Activated T-helper 2 cell treated with anti-CD3 and anti-CD28 coated beads, Interferon-gamma antibody, Interleukin-2, Interleukin-4, amounts not matched to agents 10 μg/mL and 5 μg/mL and 100 μg/mL, durations not matched to agents 14 hours and 24 hours and 36 hours (primary cell): ENCODE measurements at regions of chrX and their contacts with region 1.

Region 1: GRCh38 chrX:51802917-51803688 is 59.9 kb downstream of the GSPT2 start:
- DNase-seq: peak; percentile 31
- H3K4me3 Mint-ChIP-seq: peak overlapping the region; percentile 92
- H3K27ac Mint-ChIP-seq: peak overlapping the region; percentile 92
- H3K4me1 Mint-ChIP-seq: peaks cover 18% of the 10 kb centered on the region
- H3K27me3 Mint-ChIP-seq: peaks cover 5% of the 10 kb centered on the region

Region 2: DNA sequence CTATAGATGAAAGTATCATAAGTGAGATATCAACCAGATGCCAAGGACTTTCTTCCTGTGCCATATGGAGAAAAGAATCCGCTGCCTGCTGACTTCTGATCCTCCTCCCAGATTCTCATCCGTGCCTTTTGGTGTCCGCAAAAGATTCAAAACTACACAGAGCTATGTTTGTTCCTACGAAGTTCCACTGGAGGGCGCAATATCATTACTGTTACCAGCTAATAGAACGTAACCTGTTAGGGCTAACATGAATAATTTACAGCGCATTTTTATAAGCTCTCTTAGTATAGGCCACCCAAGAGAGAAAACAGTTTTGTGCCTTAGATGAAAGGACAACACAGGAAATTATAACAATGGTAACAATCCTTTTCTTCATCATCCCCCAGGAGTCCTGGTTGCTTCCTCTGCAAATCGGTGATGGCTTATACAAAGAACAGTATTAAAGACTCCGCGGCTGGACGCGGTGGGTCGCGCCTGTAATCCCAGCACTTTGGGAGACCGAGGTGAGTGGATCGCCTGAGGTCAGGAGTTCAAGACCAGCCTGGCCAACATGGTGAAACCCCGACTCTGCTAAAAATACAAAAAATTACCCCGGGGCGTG is 161.6 kb before region 1 on chrX:
- intact Hi-C with region 1: loop called (anchors 1 kb)
- DNase-seq: no peak
- H3K4me3 Mint-ChIP-seq: no peak overlapping the region
- H3K27ac Mint-ChIP-seq: no peak overlapping the region
- H3K4me1 Mint-ChIP-seq: no peaks in the 10 kb centered on the region
- H3K27me3 Mint-ChIP-seq: peaks cover 5% of the 10 kb centered on the region

Region 3: GRCh38 chrX:51743179-51743957 is 59.7 kb before region 1 on chrX and contains the start of gene GSPT2:
- intact Hi-C with region 1: loop called (anchors 1 kb)
- DNase-seq: peak; percentile 64
- H3K4me3 Mint-ChIP-seq: peak within 1 kb of the TSS; percentile 91
- H3K27ac Mint-ChIP-seq: peak within 1 kb of the TSS; percentile 74
- H3K4me1 Mint-ChIP-seq: peaks cover 9% of the 10 kb centered on the region
- H3K27me3 Mint-ChIP-seq: peaks cover 7% of the 10 kb centered on the region
- total RNA-seq, gene GSPT2: 11.4 and 12.1 TPM in 2 replicates

Region 4: DNA sequence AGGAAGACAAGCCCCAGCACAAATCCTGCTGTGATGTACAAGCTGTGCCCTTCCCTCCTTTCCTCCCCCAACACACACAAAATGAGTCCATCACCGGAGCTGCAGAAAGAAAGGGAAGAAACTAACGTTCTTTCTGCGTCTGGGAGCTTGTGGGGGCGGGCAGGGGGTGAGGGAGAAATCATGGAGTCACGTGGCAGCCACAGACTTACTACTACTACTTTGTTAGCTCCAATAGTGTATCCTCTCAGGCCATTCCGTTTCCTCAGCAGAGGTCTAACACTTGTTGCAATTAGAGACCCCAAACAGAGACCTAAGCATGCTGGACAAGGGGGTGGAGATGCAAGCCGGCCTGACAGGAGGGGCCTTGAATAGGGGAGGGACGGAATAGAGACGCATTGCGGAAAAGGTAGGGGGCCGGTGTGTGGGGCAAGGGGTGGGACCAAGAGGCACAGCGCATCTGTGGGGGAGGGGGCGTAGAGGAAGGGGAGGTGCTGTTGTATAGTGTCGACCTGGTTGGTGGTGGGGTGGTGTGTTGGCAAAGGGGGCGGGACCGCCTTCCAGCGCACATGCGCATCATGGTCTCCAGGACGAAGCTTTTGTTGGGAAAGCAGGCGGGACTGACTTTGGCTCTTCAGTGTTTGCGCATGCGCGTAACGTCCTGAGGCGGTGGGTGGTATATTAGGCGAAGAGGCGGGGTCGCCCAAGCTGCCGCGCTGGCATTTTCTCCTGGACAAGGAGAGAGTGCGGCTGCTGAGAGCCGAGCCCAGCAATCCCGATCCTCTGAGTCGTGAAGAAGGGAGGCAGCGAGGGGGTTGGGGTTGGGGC is 90.0 kb after region 1 on chrX and contains the start of gene MAGED1:
- intact Hi-C with region 1: loop called (anchors 10 kb)
- DNase-seq: peak; percentile 75
- H3K4me3 Mint-ChIP-seq: peak within 1 kb of the TSS; percentile 96
- H3K27ac Mint-ChIP-seq: peak within 1 kb of the TSS; percentile 91
- H3K4me1 Mint-ChIP-seq: peaks cover 25% of the 10 kb centered on the region
- H3K27me3 Mint-ChIP-seq: no peaks in the 10 kb centered on the region
- total RNA-seq, gene MAGED1: 45.5 and 46.5 TPM in 2 replicates

Region 5: GRCh38 chrX:51922561-51922960 is 119.5 kb after region 1 on chrX:
- intact Hi-C with region 1: no loop called
- DNase-seq: no peak
- H3K4me3 Mint-ChIP-seq: no peak overlapping the region
- H3K27ac Mint-ChIP-seq: no peak overlapping the region
- H3K4me1 Mint-ChIP-seq: no peaks in the 10 kb centered on the region
- H3K27me3 Mint-ChIP-seq: peaks cover 1% of the 10 kb centered on the region